CD8-positive, alpha-beta T cell (primary cell): ENCODE measurements at regions of chr5 and their contacts with region 1.

Region 1: DNA sequence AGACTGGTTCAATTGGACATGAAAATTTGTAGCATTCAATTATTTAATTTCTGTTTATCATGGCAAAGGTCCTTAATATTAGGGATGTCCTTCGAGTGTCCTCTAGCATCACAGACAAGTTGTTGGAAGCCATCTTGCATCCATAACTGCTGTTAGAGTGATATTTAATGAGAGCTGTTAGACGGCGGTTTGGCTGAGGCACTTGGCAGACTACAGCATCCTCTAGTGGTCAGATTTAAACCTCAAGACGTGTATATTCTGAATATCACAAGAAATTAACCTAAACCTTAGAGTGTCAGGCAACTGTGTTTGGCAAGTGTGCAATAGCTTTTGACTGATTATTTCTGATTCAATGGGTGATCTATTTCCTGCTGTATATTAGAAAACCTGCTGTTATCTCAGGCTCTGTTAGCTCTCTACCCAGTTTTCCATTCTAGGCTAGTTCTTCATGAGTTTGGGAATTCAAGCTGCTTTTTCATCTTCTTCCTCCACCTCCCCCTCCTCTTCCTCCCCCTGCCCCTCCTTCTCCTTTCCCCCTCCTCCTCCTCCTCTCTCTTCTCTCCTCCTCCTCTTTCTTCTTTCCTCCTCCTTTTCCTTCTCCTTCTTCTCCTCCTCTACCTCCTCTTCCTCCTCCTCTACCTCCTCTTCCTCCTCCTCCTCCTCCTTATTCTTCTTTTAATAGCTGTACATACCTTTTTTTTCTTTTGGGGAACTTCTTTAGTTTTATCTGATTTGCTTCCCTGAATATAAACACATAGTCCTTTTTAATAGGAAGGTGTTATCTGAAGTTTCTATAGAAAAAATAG is 8.6 kb downstream of the SPINK1 start:
- DNase-seq: peak in 7 of 9 experiments; percentile 6 to 80 (median 39)
- ATAC-seq: peak; percentile 85
- H3K4me3 ChIP-seq: no peak overlapping the region
- H3K4me3 Mint-ChIP-seq: no peak overlapping the region
- H3K27ac ChIP-seq: no peak overlapping the region
- H3K27ac Mint-ChIP-seq: no peak overlapping the region
- H3K4me1 ChIP-seq: no peaks in the 10 kb centered on the region
- H3K4me1 Mint-ChIP-seq: no peaks in the 10 kb centered on the region
- H3K27me3 ChIP-seq: peaks cover 0 to under 1% of the 10 kb centered on the region in 2 experiments
- H3K27me3 Mint-ChIP-seq: peaks cover 3% of the 10 kb centered on the region
- CTCF ChIP-seq: peak; percentile 96

Region 2: DNA sequence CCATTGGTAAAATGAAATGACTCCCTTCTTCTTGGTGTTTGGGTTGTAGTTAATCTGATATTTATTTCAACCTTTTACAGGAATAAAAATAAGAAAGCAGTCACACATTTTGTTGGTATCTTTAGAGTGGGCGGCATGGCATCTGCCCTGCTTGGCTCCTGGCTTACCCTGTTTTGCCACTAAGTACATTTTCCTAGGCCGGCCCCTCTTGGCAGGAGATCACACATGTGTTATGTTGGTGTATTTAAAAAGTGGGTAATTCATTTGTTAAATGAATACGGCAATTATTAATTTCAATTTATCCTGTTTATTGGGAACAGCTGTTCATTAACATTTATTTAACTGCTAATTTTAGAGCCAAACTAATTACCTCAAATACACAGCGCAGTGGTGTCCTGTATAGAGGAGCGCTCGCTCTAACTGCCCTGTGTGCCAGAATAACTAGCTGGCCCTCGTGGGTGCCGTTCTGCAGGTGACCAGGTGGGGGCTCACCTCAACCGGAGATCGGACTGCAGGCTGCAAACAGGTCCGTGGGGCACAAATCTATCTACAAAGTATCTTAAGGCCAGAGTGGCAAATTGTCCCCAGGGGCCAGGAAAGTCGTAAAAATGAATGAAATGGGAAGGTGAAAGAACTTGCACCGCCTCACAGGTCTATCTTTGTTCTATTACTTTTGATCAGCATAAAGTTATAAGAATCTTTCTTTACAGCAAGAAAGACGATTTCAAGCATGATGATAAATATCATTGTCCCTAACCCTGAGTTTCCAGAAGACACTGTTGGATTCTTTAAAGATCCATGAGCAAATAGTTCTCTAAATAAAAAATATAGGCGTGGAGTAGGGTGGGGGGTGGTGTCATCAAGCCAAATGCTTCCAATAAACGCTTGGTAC is 1280.7 kb before region 1 on chr5:
- CTCF ChIA-PET with region 1: no interaction called
- POLR2A ChIA-PET with region 1: no interaction called
- intact Hi-C with region 1: loop called in 1 of 2 experiments (anchors 5 kb)
- DNase-seq: peak; percentile 46 to 80 (median 67)
- ATAC-seq: peak; percentile 85
- H3K4me3 ChIP-seq: no peak overlapping the region
- H3K4me3 Mint-ChIP-seq: no peak overlapping the region
- H3K27ac ChIP-seq: no peak overlapping the region
- H3K27ac Mint-ChIP-seq: no peak overlapping the region
- H3K4me1 ChIP-seq: no peaks in the 10 kb centered on the region
- H3K4me1 Mint-ChIP-seq: no peaks in the 10 kb centered on the region
- H3K27me3 ChIP-seq: no peaks in the 10 kb centered on the region
- H3K27me3 Mint-ChIP-seq: no peaks in the 10 kb centered on the region
- CTCF ChIP-seq: peak; percentile 95

Region 3: DNA sequence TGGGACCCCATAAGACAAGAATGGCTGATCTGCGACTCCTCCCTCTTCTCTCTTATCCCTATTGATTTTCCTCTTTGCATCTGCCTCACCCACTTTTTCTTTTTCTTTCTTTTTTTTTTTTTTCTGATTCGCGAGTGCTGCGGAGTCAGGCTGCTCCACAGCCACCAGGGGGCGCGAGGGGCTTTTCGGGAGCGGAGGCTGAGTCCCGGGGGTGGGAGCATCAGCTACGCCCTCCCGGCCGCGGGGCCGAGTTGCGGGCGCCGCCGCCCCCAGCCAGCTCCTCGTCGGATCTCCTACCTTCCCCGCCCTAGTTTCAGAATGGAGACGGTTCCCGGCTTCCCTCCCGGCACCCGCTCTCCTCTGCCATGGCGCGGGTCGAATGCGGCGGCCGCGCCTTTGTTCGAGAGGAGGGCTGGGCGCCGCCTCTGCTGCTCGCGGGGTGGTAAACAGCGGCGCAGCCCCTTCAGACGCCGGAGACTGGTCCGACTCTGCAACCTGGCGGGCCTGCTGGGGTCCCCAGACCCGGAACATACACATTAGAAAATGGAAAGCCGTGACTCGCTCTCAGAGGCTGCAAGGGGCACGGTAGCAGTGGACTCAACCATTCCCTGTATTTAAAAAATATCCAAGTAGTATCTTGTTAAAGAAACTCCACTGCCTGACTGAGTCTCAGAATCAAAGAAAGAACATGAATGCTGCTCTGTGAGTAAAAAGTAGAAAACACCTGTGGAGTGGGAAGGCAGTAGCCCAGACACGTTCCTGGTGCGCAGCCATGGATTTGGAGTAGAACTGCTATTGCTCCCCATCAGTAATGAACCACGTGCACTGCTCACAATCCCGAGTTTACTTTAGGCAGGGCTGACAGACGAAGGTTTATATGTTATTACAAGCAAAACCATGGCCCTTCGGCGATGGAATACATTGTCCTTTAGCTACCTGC is 368.7 kb before region 1 on chr5:
- CTCF ChIA-PET with region 1: interaction called, 7 read pairs
- POLR2A ChIA-PET with region 1: no interaction called
- intact Hi-C with region 1: loop called in 1 of 2 experiments (anchors 2 kb)
- DNase-seq: peak; percentile 25 to 76 (median 66)
- ATAC-seq: peak; percentile 71
- H3K4me3 ChIP-seq: peak overlapping the region; percentile 41 to 44
- H3K4me3 Mint-ChIP-seq: peak overlapping the region; percentile 82
- H3K27ac ChIP-seq: no peak overlapping the region
- H3K27ac Mint-ChIP-seq: no peak overlapping the region
- H3K4me1 ChIP-seq: peaks cover 13% of the 10 kb centered on the region
- H3K4me1 Mint-ChIP-seq: peaks cover 13% of the 10 kb centered on the region
- H3K27me3 ChIP-seq: peaks cover 12 to 17% of the 10 kb centered on the region in 2 experiments
- H3K27me3 Mint-ChIP-seq: peaks cover 76% of the 10 kb centered on the region
- CTCF ChIP-seq: peak; percentile 78

Region 4: GRCh38 chr5:147628058-147628895 is 194.6 kb before region 1 on chr5:
- CTCF ChIA-PET with region 1: interaction called, 143 read pairs
- POLR2A ChIA-PET with region 1: interaction called, 5 read pairs
- intact Hi-C with region 1: loop called (anchors 1 kb)
- DNase-seq: peak; percentile 13 to 74 (median 44)
- ATAC-seq: peak; percentile 69
- H3K4me3 ChIP-seq: no peak overlapping the region
- H3K4me3 Mint-ChIP-seq: no peak overlapping the region
- H3K27ac ChIP-seq: no peak overlapping the region
- H3K27ac Mint-ChIP-seq: no peak overlapping the region
- H3K4me1 ChIP-seq: no peaks in the 10 kb centered on the region
- H3K4me1 Mint-ChIP-seq: no peaks in the 10 kb centered on the region
- H3K27me3 ChIP-seq: no peaks in the 10 kb centered on the region
- H3K27me3 Mint-ChIP-seq: no peaks in the 10 kb centered on the region
- CTCF ChIP-seq: peak; percentile 72

Region 5: GRCh38 chr5:147782110-147783028 is 40.5 kb before region 1 on chr5 and contains the start of gene JAKMIP2:
- CTCF ChIA-PET with region 1: interaction called, 6 read pairs
- POLR2A ChIA-PET with region 1: no interaction called
- intact Hi-C with region 1: loop called in 1 of 2 experiments (anchors 5 kb)
- DNase-seq: peak; percentile 70 to 92 (median 85)
- ATAC-seq: peak; percentile 96
- H3K4me3 ChIP-seq: peak within 1 kb of the TSS; percentile 51 to 60
- H3K4me3 Mint-ChIP-seq: peak within 1 kb of the TSS; percentile 84
- H3K27ac ChIP-seq: peak within 1 kb of the TSS; percentile 46 to 77
- H3K27ac Mint-ChIP-seq: peak within 1 kb of the TSS; percentile 92
- H3K4me1 ChIP-seq: peaks cover 11% of the 10 kb centered on the region
- H3K4me1 Mint-ChIP-seq: peaks cover 31% of the 10 kb centered on the region
- H3K27me3 ChIP-seq: no peaks in the 10 kb centered on the region
- H3K27me3 Mint-ChIP-seq: no peaks in the 10 kb centered on the region
- CTCF ChIP-seq: no peak
- total RNA-seq, gene JAKMIP2: 1.1 to 2.0 TPM

Region 6: DNA sequence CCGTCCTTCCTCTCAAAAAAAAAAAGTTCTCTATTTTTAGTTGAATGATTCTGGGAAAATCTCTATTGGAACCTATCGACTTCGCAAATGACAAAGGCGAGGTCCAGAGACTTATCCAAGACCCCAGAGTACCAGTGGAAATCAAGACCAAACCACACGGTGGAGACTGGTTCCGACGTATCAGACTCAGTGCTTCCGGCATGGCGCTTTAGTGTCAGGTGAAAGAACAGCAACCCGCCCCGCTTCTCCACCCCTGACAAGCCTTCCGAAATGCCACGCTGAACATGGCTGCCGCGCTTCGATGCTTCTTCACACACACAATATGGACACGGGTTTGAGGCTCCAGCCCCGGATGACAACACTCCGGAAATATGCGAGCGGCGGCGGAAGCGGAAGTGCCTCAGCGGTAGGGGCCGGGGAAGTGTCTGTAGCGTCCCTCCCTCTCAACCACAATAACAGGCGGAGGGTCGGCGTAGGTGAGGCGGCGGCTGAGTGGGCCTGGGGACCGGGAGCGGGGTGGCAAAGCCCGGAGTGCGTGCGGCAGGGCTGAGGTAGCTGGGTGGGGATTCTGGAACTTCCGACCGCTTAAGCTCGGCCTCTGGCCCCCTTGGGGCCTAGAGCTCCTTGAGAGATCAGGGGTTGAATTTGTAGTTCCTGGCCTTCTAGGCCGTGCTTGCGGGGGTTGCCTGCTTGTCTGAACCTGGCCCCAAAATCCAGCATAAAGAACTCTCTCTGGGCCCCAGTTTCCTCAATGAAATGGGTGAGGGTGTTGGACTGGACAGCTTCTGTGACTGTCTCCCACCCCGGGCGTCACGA is 560.9 kb after region 1 on chr5 and contains the start of gene FBXO38:
- CTCF ChIA-PET with region 1: no interaction called
- POLR2A ChIA-PET with region 1: no interaction called
- intact Hi-C with region 1: no loop called
- DNase-seq: peak; percentile 94 to 99 (median 97)
- ATAC-seq: peak; percentile 95
- H3K4me3 ChIP-seq: peak within 1 kb of the TSS; percentile 77 to 83
- H3K4me3 Mint-ChIP-seq: peak within 1 kb of the TSS; percentile 87
- H3K27ac ChIP-seq: peak within 1 kb of the TSS; percentile 97
- H3K27ac Mint-ChIP-seq: peak within 1 kb of the TSS; percentile 96
- H3K4me1 ChIP-seq: peaks cover 38% of the 10 kb centered on the region
- H3K4me1 Mint-ChIP-seq: peaks cover 68% of the 10 kb centered on the region
- H3K27me3 ChIP-seq: no peaks in the 10 kb centered on the region
- H3K27me3 Mint-ChIP-seq: no peaks in the 10 kb centered on the region
- CTCF ChIP-seq: no peak
- total RNA-seq, gene FBXO38: 45.5 to 48.7 TPM